Right ventricle myocardium superior (tissue), 1 donor: ENCODE measurements at regions of chr15 and their contacts with region 1.

Region 1: DNA sequence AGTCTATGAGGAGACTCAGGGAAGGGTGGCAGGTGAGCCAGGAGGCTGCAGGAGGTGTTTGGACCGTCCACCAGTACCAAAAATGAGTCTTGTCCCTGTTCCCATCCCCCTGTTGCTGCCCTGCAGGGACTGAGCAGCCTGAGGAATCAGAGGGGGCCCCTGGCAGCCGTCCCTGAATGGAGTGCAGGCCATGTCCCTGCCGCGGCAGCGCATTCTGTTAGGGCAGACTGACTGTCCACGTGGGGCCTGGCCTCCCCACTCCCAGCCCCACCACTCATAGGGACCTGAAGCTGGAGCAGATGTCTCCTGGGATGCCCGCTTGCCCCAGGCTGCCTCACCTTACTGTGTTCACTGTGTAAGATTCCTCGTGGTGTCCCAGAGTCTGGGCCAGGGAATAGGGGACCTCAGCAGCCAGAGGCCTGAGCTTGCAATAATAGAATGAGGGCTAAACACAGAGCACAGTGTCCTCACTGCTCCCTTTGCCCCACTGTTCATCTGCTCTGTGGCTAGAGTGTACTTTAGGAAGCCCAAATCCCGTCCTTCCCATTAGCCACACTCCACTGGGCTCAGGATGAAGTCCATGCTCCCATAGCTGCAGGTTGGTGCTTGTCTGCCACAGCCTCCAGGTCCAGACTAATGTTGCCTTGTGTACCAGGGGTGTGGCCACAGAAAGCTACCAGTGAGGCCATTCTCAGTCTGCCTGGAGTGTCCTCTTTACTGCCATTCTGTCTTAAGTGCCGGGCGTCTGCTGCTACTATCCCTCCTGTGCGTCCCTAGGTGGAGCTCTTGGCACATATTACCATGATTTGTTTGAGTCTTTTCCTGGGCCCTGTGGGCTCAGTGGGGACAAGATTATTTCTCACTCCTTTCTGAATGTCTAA is 63.2 kb downstream of the HCN4 start:
- DNase-seq: no peak
- ATAC-seq: peak; percentile 88

Region 2: DNA sequence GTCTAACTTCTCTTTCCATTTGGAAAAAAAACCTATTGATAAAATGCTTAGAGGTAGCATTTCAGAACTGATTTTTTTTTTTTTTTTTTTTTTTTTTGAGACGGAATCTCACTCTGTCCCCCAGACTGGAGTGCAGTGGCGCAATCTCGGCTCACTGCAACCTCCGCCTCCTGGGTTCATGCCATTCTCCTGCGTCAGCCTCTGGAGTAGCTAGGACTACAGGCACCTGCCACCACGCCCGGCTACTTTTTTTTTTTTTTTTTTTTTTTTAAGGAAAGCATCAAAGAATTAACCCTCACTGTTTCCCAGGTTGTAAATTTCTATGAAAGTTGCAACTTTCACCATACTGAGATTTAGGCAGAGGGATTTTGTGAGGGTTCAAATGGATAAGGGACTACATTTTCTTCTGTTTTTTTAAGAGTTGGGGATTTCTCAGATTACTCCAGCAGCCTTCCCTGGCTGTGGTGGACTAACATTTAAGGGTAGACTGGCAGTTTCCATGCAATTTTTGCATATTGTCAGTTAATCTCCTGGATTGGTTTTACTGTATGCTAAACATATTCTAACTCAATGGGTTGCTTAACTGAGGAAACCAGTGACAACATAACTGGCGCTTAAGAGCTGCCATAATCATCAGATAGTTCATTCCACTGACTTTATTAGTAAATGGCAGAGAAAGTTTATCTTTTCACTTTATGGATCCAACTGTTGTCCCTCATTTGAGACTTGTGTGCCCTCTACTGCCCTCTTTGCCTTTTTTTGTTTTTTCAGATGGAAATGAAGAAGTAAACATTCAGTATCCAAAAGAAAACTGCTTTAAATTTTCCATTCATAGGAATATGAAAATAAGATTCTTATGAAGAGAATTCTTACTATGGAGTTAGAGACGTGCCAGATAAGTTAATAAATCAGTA is 233.9 kb after region 1 on chr15:
- intact Hi-C with region 1: loop called (anchors 10 kb)
- DNase-seq: no peak
- ATAC-seq: no peak

Region 3: GRCh38 chr15:73633111-73633990 is 327.8 kb after region 1 on chr15 and contains the start of gene NPTN:
- intact Hi-C with region 1: loop called (anchors 10 kb)
- DNase-seq: peak; percentile 99
- ATAC-seq: peak; percentile 95
- total RNA-seq, gene NPTN: 188 TPM

Region 4: DNA sequence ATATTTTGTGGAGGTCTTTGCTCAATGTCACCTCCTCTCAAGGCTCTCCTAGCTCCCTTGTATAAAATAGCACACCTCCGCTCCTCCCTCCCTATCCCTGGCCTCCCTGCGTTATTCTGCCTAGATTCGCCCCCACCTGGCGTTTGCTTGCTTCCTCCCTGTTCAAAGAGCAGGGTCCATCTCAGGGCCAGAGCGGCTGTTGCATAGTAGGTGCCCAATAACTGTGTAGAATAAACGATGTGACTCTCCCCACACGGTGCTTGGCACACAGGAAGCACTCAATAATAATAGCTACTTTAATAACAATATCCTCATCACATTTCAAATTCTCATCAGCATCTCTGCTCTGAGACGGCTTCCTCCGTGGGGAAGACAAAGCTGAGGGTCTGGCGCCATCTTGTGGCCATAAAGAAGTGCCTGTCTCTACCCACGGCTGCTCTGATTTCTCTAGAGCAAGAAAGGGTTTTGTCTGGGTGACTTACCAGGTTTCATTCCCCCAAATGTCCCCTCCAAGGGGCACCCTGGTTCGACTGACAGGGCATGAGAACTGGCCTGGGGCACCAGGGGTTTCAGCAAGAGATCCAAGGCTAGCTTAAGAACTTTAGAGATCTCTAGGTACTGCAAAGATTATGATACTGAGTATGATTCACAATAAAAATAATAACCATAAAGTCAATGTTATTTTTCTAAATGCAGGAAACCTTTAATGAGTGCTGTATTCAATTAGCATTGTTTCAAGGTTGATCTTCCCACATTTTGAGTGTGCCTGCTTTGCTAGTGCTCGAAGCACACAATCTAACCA is 394.7 kb after region 1 on chr15:
- intact Hi-C with region 1: loop called (anchors 10 kb)
- DNase-seq: peak; percentile 79
- ATAC-seq: peak; percentile 58